Gastrocnemius medialis (tissue), 4 donors: ENCODE measurements at regions of chr18 and their contacts with region 1.

Region 1: GRCh38 chr18:3151399-3152264 is 68.1 kb downstream of the MYOM1 start:
- DNase-seq: no peak
- ATAC-seq: no peak
- H3K4me3 ChIP-seq: no peak overlapping the region
- H3K27ac ChIP-seq: peak overlapping the region in 3 of 4 donors; percentile 10 to 49 (median 33)
- H3K4me1 ChIP-seq: peaks cover 12 to 18% of the 10 kb centered on the region in 2 donors
- H3K27me3 ChIP-seq: no peaks in the 10 kb centered on the region
- CTCF ChIP-seq: peak; percentile 45 to 84 (median 61)
- POLR2A ChIP-seq: no peak

Region 2: DNA sequence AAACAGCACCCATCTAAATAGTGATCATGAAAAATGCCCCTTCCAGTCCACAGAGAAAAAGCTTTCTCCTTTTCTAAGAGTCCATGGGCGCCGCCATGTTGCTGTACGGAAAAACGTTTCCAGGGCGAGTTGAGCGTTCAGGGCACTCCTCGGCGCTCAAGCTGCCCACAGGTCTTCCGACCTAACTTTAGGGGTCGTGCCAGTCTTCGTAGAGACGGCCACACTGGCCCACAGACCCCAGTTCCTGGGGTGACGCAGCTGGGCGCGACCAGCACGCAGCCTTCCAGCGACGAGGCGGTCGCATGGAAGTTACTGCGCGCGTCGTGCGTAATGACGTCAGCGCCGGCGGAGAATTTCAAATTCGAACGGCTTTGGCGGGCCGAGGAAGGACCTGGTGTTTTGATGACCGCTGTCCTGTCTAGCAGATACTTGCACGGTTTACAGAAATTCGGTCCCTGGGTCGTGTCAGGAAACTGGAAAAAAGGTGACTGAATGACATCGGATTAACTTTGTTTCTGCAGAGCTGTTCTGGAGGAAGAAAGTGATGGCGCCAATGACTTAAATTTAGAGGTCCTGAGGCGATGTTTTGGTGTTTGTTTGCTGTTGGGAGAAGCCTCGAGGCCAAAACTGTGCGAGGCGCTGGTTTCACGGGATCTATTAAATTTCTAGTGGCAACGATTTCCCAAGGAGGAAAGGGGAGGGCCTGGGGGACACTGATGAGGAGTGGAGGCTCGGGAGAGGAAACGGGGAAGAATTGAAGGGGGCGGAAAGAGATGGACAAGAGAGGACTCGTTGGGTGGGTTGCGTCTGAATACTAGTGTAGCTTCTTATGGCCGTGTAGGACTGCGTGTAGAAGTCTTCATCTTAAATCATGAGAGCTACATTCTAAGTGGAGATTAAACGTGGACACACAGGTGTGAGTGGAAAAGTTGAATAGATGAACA is 580.2 kb before region 1 on chr18 and contains the starts of genes METTL4 and NDC80:
- in situ Hi-C with region 1: loop called in 1 of 4 experiments (anchors 25 kb)
- intact Hi-C with region 1: no loop called
- DNase-seq: peak; percentile 62 to 71
- ATAC-seq: peak; percentile 91 to 93
- H3K4me3 ChIP-seq: peak within 1 kb of the TSS; percentile 59 to 85 (median 72)
- H3K27ac ChIP-seq: peak within 1 kb of the TSS; percentile 87 to 97 (median 90)
- H3K4me1 ChIP-seq: peaks cover 15 to 16% of the 10 kb centered on the region in 2 donors
- H3K27me3 ChIP-seq: no peaks in the 10 kb centered on the region
- CTCF ChIP-seq: no peak
- POLR2A ChIP-seq: peak; percentile 20 to 29
- total RNA-seq, gene METTL4: 1.4 to 2.9 (median 1.8) TPM
- total RNA-seq, gene NDC80: 0.27 TPM in 1 of 4 donors, not detected in the others

Region 3: DNA sequence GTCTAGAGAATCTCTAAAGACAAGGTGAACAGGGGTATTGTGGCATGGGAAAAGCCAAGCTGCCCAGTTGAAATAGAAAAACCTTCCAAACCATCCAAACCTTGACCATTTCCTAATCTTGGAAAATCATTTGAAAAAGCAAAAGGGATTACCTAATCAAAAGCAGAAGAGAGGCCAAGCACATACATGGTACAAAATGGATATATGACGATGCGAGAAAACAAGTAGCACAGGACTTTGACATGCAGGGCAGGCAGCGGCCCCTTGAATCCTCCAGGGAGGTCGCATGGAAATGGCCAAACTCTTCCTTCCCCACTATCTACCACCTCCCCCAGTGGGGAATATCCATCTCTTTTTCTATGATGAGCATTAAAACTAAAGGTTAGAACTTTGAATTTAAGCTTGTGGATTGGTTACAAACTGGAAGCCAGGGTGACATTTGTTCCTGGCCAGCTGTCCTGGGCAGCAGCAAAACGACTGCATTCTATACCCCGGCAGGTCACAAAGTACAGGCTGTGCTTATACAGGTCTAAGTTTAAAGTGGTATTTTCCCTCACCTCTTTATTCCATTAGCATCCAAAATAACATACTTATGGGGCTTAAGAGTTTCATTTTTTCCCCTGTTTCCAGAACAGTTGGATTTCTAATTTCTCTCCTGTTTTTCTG is 43.4 kb after region 1 on chr18:
- in situ Hi-C with region 1: no loop called
- intact Hi-C with region 1: loop called (anchors 5 kb)
- DNase-seq: peak; percentile 46 to 53
- ATAC-seq: peak; percentile 59 to 64
- H3K4me3 ChIP-seq: peak overlapping the region; percentile 12 to 31 (median 18)
- H3K27ac ChIP-seq: peak overlapping the region; percentile 81 to 90 (median 86)
- H3K4me1 ChIP-seq: peaks cover 64 to 73% of the 10 kb centered on the region in 2 donors
- H3K27me3 ChIP-seq: no peaks in the 10 kb centered on the region
- CTCF ChIP-seq: no peak
- POLR2A ChIP-seq: no peak